Naive thymus-derived CD4-positive, alpha-beta T cell (primary cell): ENCODE measurements at regions of chr6 and their contacts with region 1.

Region 1: GRCh38 chr6:3742426-3743344 is 8.8 kb downstream of the PXDC1 start:
- DNase-seq: peak; percentile 73 to 92 (median 85)
- ATAC-seq: peak; percentile 94
- H3K4me3 ChIP-seq: no peak overlapping the region
- H3K4me3 Mint-ChIP-seq: peak overlapping the region; percentile 26 to 73 (median 58)
- H3K27ac ChIP-seq: no peak overlapping the region
- H3K27ac Mint-ChIP-seq: peak overlapping the region in 7 of 9 donors; percentile 2 to 81 (median 38)
- H3K4me1 ChIP-seq: peaks cover 0 to 5% of the 10 kb centered on the region in 2 donors
- H3K4me1 Mint-ChIP-seq: peaks cover 0 to 14% (median 12%) of the 10 kb centered on the region in 7 donors
- H3K27me3 ChIP-seq: no peaks in the 10 kb centered on the region
- H3K27me3 Mint-ChIP-seq: peaks cover 11 to 29% (median 17%) of the 10 kb centered on the region in 5 donors

Region 2: GRCh38 chr6:2344319-2344905 is 1398.3 kb before region 1 on chr6:
- CTCF ChIA-PET with region 1: no interaction called
- POLR2A ChIA-PET with region 1: no interaction called
- intact Hi-C with region 1: no loop called
- DNase-seq: no peak
- ATAC-seq: no peak
- H3K4me3 ChIP-seq: no peak overlapping the region
- H3K4me3 Mint-ChIP-seq: no peak overlapping the region
- H3K27ac ChIP-seq: no peak overlapping the region
- H3K27ac Mint-ChIP-seq: no peak overlapping the region
- H3K4me1 ChIP-seq: no peaks in the 10 kb centered on the region
- H3K4me1 Mint-ChIP-seq: no peaks in the 10 kb centered on the region
- H3K27me3 ChIP-seq: no peaks in the 10 kb centered on the region
- H3K27me3 Mint-ChIP-seq: no peaks in the 10 kb centered on the region

Region 3: DNA sequence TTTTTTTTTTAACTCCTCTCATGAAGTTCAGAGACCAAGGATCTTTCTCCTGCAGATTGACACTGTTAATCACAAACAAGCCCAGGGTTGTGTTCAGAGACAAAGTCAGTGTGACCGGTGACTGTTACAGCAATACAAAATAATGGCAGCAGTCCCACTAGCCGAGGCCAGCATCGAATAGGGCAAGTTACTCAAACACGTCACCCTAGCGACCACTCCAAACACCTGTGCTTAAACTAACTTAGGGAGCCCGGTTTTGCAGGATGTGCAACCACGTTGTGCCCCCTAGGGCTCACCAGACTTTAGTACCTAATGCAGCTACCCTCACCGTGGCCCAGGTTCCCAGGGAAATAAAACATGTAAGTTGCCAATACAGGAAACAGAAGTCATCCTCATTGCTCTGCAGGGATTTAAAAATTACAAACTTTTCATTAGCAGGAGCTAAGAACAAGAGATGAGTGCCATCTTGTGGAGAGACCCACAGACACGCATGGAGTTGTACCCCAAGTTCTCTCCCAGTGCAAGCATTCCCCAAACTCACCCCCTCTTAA is 144.5 kb after region 1 on chr6:
- CTCF ChIA-PET with region 1: no interaction called
- POLR2A ChIA-PET with region 1: no interaction called
- intact Hi-C with region 1: loop called (anchors 1 kb)
- DNase-seq: no peak
- ATAC-seq: no peak
- H3K4me3 ChIP-seq: no peak overlapping the region
- H3K4me3 Mint-ChIP-seq: no peak overlapping the region
- H3K27ac ChIP-seq: no peak overlapping the region
- H3K27ac Mint-ChIP-seq: no peak overlapping the region
- H3K4me1 ChIP-seq: no peaks in the 10 kb centered on the region
- H3K4me1 Mint-ChIP-seq: no peaks in the 10 kb centered on the region
- H3K27me3 ChIP-seq: no peaks in the 10 kb centered on the region
- H3K27me3 Mint-ChIP-seq: peaks cover 0 to 8% (median 3%) of the 10 kb centered on the region in 5 donors

Region 4: GRCh38 chr6:3977875-3978711 is 235.4 kb after region 1 on chr6:
- CTCF ChIA-PET with region 1: interaction called, 16 read pairs
- POLR2A ChIA-PET with region 1: no interaction called
- intact Hi-C with region 1: loop called (anchors 1 kb)
- DNase-seq: peak in 8 of 9 donors; percentile 23 to 69 (median 52)
- ATAC-seq: peak; percentile 98
- H3K4me3 ChIP-seq: no peak overlapping the region
- H3K4me3 Mint-ChIP-seq: no peak overlapping the region
- H3K27ac ChIP-seq: no peak overlapping the region
- H3K27ac Mint-ChIP-seq: peak overlapping the region in 3 of 9 donors; percentile 5 to 66 (median 5)
- H3K4me1 ChIP-seq: no peaks in the 10 kb centered on the region
- H3K4me1 Mint-ChIP-seq: peaks cover 6 to 13% (median 10%) of the 10 kb centered on the region in 7 donors
- H3K27me3 ChIP-seq: no peaks in the 10 kb centered on the region
- H3K27me3 Mint-ChIP-seq: peaks cover 0 to 30% (median 0%) of the 10 kb centered on the region in 5 donors

Region 5: DNA sequence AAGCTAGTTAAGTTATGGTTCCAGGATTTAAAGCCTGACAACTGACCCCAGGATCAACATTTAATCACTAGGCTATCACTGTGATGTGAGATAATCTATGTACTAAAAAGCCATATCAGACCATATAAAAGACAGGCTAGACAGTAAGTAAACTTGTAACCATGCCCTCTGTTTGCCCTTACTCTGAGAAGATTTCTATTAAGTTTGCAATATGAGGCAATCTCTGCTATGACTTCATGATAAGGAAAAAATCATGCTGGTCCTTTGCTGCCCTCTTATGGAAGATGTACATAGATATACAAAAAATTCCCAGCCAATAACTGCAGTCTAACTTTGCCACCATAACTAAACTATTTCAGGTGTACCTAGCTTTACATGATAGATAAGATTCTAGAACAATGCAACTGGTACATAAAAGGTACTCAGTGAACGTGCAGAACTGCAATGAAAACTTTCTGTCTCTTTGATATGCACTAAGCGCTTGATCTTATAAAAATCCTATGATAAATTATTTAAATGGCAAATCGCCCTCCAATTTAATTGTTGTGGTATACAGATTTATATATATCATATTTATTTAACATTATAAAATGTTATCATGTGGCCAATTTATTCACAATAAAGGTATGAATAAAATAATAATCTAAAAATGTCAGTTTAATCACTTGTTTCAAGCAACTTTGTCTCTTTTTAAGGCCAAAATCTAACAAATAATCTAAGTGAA is 265.8 kb after region 1 on chr6:
- CTCF ChIA-PET with region 1: interaction called, 4 read pairs
- POLR2A ChIA-PET with region 1: interaction called, 4 read pairs
- intact Hi-C with region 1: loop called (anchors 1 kb)
- DNase-seq: peak in 7 of 9 donors; percentile 27 to 63 (median 57)
- ATAC-seq: peak; percentile 94
- H3K4me3 ChIP-seq: no peak overlapping the region
- H3K4me3 Mint-ChIP-seq: peak overlapping the region in 1 of 10 donors; percentile 36
- H3K27ac ChIP-seq: no peak overlapping the region
- H3K27ac Mint-ChIP-seq: peak overlapping the region in 3 of 9 donors; percentile 0 to 63 (median 43)
- H3K4me1 ChIP-seq: peaks cover 15 to 27% of the 10 kb centered on the region in 2 donors
- H3K4me1 Mint-ChIP-seq: peaks cover 40 to 71% (median 60%) of the 10 kb centered on the region in 7 donors
- H3K27me3 ChIP-seq: no peaks in the 10 kb centered on the region
- H3K27me3 Mint-ChIP-seq: no peaks in the 10 kb centered on the region

Region 6: DNA sequence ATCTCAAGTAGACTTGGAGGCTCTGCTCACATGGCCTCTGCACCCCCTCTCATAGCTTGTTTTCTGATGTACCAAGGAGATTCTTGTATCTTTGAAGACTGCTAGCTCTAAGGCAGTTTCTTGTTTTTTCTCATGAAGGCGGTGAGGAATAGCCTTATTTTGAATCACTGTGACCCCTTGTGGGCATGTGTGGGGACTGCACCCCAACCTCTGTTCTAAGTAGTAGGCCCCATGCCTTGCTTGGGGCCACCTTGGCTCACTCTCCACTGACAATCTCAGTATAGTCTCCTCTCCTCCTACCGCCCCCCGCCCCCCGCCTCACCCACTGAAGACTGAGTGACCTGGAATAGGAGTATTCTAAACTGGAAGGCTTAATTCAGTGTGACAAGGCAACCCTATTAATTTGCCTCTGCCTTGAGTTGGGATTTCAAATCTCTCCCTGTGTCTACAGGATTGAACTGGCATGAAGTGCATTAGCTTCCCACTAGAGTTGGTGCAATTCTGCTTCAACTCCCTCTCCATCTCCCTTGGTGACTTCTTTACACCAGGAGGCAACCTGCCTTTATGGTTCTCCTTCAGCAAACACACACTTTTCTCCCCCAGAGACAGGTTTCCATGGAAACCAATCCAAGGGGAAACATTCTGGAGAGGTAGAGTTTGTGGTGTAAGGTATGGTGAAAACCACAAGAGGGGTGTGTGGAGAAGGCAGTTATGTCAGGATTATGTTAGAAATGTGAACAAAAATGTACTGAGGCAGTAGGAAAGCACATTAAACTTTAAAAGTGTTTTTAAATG is 468.1 kb after region 1 on chr6:
- CTCF ChIA-PET with region 1: interaction called, 4 read pairs
- POLR2A ChIA-PET with region 1: no interaction called
- intact Hi-C with region 1: loop called in 1 of 2 experiments (anchors 1 kb)
- DNase-seq: peak; percentile 17 to 56 (median 45)
- ATAC-seq: peak; percentile 86
- H3K4me3 ChIP-seq: no peak overlapping the region
- H3K4me3 Mint-ChIP-seq: peak overlapping the region in 5 of 10 donors; percentile 1 to 59 (median 25)
- H3K27ac ChIP-seq: no peak overlapping the region
- H3K27ac Mint-ChIP-seq: peak overlapping the region in 6 of 9 donors; percentile 14 to 70 (median 52)
- H3K4me1 ChIP-seq: peaks cover 0 to 16% of the 10 kb centered on the region in 2 donors
- H3K4me1 Mint-ChIP-seq: peaks cover 12 to 36% (median 23%) of the 10 kb centered on the region in 7 donors
- H3K27me3 ChIP-seq: no peaks in the 10 kb centered on the region
- H3K27me3 Mint-ChIP-seq: peaks cover 0 to 7% (median under 1%) of the 10 kb centered on the region in 5 donors